ENCODE measurements at regions of chr4 and their contacts with region 1.

Region 1: DNA sequence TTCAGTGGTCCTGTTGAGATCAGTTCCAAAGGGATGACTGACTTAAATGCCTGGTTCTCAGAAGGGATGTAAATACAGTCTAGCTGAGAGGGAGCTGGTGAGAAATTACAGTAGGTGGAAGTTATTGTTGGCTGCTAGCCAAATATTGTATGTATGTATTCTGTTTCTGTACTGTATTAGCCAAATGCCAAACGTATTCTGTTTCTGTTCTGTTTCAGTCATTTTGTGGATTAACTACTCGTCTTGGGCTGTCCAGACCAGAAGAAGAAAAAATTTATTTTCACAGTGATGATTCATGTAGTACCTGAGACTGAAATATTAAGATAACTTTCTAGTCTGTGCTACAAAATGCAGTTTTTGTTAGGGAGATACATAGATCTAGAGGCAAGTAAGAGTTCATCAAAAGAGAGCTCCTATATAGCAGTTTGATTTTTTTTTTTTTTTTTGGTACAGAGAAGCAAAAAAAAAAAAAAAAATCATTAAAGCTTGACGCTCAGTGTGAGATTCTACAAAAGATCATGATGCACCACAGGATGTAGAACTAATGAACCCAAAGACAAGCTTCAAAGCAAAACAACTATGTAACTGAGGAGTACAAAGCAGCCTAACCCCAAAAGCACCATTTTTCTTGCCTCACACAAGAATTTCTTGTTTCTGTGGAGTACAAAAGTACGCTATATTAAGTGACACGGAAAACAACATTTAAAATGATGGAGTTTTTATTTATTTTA is 54.8 kb downstream of the CASP6 start:
- DNase-seq: no peak
- ATAC-seq: peak; percentile 34
- H3K4me3 Mint-ChIP-seq: peak overlapping the region; percentile 47
- H3K27ac Mint-ChIP-seq: peak overlapping the region; percentile 88
- H3K4me1 Mint-ChIP-seq: peaks cover 45% of the 10 kb centered on the region
- H3K27me3 Mint-ChIP-seq: no peaks in the 10 kb centered on the region

Region 2: GRCh38 chr4:109548655-109549054 is 99.8 kb before region 1 on chr4:
- CTCF ChIA-PET with region 1: no interaction called
- POLR2A ChIA-PET with region 1: no interaction called
- intact Hi-C with region 1: no loop called
- DNase-seq: peak; percentile 61
- ATAC-seq: peak; percentile 88
- H3K4me3 Mint-ChIP-seq: no peak overlapping the region
- H3K27ac Mint-ChIP-seq: peak overlapping the region; percentile 69
- H3K4me1 Mint-ChIP-seq: peaks cover 24% of the 10 kb centered on the region
- H3K27me3 Mint-ChIP-seq: no peaks in the 10 kb centered on the region

Region 3: DNA sequence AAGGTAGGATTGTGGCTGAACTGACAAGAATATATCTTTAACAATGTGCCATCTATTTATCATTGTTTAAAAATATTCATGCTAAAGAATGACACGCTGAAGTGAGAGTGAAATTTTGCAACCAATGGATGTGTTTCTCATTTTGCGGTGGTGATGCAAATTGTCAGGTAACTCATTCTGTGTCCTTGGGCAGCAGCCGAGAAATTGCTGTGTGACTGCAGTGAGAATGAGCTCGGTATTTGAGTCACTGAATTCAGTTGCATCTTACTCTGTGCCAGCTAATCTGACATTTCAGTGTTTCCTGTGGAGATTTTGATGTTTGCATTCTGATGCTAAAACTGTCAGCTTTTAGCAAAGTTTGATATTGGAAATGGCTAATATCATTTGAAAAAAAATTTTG is 60.3 kb before region 1 on chr4:
- CTCF ChIA-PET with region 1: no interaction called
- POLR2A ChIA-PET with region 1: interaction called, 3 read pairs
- intact Hi-C with region 1: loop called (anchors 2 kb)
- DNase-seq: peak; percentile 82
- ATAC-seq: peak; percentile 99
- H3K4me3 Mint-ChIP-seq: peak overlapping the region; percentile 11
- H3K27ac Mint-ChIP-seq: peak overlapping the region; percentile 86
- H3K4me1 Mint-ChIP-seq: peaks cover 84% of the 10 kb centered on the region
- H3K27me3 Mint-ChIP-seq: no peaks in the 10 kb centered on the region

Region 4: GRCh38 chr4:109690690-109691410 is 42.4 kb after region 1 on chr4:
- CTCF ChIA-PET with region 1: interaction called, 3 read pairs
- POLR2A ChIA-PET with region 1: no interaction called
- intact Hi-C with region 1: loop called in 1 of 2 experiments (anchors 1 kb)
- DNase-seq: no peak
- ATAC-seq: peak; percentile 54
- H3K4me3 Mint-ChIP-seq: no peak overlapping the region
- H3K27ac Mint-ChIP-seq: peak overlapping the region; percentile 65
- H3K4me1 Mint-ChIP-seq: peaks cover 28% of the 10 kb centered on the region
- H3K27me3 Mint-ChIP-seq: no peaks in the 10 kb centered on the region

Region 5: GRCh38 chr4:110287130-110287529 is 638.7 kb after region 1 on chr4:
- CTCF ChIA-PET with region 1: no interaction called
- POLR2A ChIA-PET with region 1: no interaction called
- intact Hi-C with region 1: no loop called
- DNase-seq: peak; percentile 39
- ATAC-seq: peak; percentile 97
- H3K4me3 Mint-ChIP-seq: no peak overlapping the region
- H3K27ac Mint-ChIP-seq: no peak overlapping the region
- H3K4me1 Mint-ChIP-seq: peaks cover 8% of the 10 kb centered on the region
- H3K27me3 Mint-ChIP-seq: peaks cover 28% of the 10 kb centered on the region

Region 6: DNA sequence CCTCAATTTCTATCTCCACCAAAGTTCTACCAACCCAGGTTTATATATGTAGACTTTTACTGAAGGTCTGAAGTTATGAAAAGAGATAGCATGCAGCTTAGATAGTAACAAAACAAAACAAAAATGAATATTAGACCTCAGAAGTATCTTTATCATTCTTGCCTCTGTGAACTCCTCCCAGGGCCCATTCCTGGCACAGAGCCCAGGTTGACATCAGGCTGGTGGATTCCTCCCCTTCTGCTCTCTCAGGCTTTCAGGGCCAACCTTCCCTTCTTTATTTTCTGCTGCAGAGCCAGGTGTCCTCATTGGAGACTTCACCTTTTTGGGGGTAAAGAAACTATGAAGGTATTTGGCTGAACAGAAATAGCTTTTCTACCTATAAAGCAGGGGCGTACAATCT is 1087.3 kb after region 1 on chr4:
- CTCF ChIA-PET with region 1: no interaction called
- POLR2A ChIA-PET with region 1: no interaction called
- intact Hi-C with region 1: no loop called
- DNase-seq: no peak
- ATAC-seq: no peak
- H3K4me3 Mint-ChIP-seq: no peak overlapping the region
- H3K27ac Mint-ChIP-seq: no peak overlapping the region
- H3K4me1 Mint-ChIP-seq: no peaks in the 10 kb centered on the region
- H3K27me3 Mint-ChIP-seq: peaks cover 2% of the 10 kb centered on the region